Stomach (tissue), 19 donors: ENCODE measurements at regions of chr4 and their contacts with region 1.

Region 1: GRCh38 chr4:158259955-158260575 is 49.8 kb downstream of the TMEM144 start:
- DNase-seq: peak in 1 of 2 donors; percentile 31
- H3K4me3 ChIP-seq: no peak overlapping the region
- H3K27ac ChIP-seq: no peak overlapping the region
- H3K4me1 ChIP-seq: peaks cover 0 to 5% (median 0%) of the 10 kb centered on the region in 4 donors
- H3K27me3 ChIP-seq: no peaks in the 10 kb centered on the region
- CTCF ChIP-seq: peak in 1 of 7 experiments; percentile 11
- EP300 ChIP-seq: no peak
- POLR2A ChIP-seq: no peak

Region 2: GRCh38 chr4:158610790-158611189 is 350.7 kb after region 1 on chr4:
- intact Hi-C with region 1: loop called (anchors 10 kb)
- DNase-seq: no peak
- H3K4me3 ChIP-seq: no peak overlapping the region
- H3K27ac ChIP-seq: no peak overlapping the region
- H3K4me1 ChIP-seq: no peaks in the 10 kb centered on the region
- H3K27me3 ChIP-seq: peaks cover 0 to 4% (median 0%) of the 10 kb centered on the region in 3 donors
- CTCF ChIP-seq: no peak
- EP300 ChIP-seq: no peak
- POLR2A ChIP-seq: no peak